Heart left ventricle (tissue), 16 donors: ENCODE measurements at regions of chr7 and their contacts with region 1.

Region 1: DNA sequence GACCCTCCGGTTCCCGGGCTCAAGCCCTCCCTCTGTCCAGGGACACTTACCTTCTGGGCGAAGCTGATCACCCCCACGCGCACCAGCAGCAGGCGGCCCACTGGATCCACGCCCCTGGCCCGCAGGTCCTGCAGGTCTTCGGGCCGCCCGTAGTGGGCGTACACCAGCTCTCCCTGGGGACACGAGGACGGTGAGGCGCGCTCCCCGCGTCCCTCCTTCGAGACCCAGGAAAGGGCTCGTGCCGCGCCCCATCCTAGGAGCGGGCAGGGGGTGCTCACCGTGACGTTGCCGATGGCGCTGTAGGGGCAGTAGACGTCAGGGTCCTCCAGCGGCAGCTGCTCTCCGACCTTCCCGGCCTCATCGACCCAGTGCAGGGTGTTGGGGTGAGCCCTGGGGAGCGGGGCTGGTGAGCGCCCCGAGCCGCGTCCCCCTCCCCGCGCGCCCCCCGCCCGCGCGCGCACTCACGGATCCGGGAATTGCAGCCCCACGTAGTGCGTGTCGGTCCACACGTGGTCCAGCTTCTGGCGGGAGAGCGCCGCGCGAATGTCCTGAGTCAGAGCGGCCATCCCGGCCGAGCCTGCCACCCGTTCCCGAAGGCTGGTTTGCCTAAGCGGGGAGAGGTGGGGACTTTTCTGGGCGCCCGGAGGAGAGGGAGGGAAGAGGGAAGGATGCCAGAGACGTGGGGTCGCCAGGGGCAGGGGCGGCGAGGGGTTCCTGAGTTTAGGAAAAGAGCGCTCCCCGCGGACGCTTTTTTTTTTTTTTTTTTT is 8.2 kb downstream of the TFR2 start:
- DNase-seq: peak; percentile 27 to 72 (median 39)
- ATAC-seq: peak in 3 of 4 donors; percentile 53 to 70 (median 60)
- H3K4me3 ChIP-seq: peak overlapping the region; percentile 22 to 67 (median 49)
- H3K27ac ChIP-seq: no peak overlapping the region
- H3K4me1 ChIP-seq: peaks cover 0 to 13% (median 9%) of the 10 kb centered on the region in 12 donors
- H3K27me3 ChIP-seq: peaks cover 4 to 17% (median 12%) of the 10 kb centered on the region in 9 donors
- CTCF ChIP-seq: peak in 6 of 12 donors; percentile 6 to 43 (median 26)
- POLR2A ChIP-seq: no peak

Region 2: GRCh38 chr7:100705753-100706671 is 72.9 kb after region 1 on chr7 and contains the start of gene POP7:
- intact Hi-C with region 1: loop called in 1 of 10 experiments (anchors 2 kb)
- DNase-seq: peak; percentile 99 to 100 (median 99)
- ATAC-seq: peak; percentile 96 to 99 (median 98)
- H3K4me3 ChIP-seq: peak within 1 kb of the TSS; percentile 53 to 88 (median 77)
- H3K27ac ChIP-seq: peak within 1 kb of the TSS; percentile 91 to 99 (median 94)
- H3K4me1 ChIP-seq: peaks cover 0 to 28% (median 18%) of the 10 kb centered on the region in 12 donors
- H3K27me3 ChIP-seq: no peaks in the 10 kb centered on the region
- CTCF ChIP-seq: no peak
- POLR2A ChIP-seq: peak in 1 of 2 donors; percentile 71
- total RNA-seq, gene POP7: 24.1 to 41.3 (median 28.9) TPM